HepG2 (cell line): ENCODE measurements at regions of chr9 and their contacts with region 1.

Region 1: GRCh38 chr9:15552636-15553527 is at the start of gene CCDC171:
- DNase-seq: peak; percentile 90
- ATAC-seq: peak; percentile 99
- H3K4me3 ChIP-seq: peak within 1 kb of the TSS; percentile 66 to 80 (median 72)
- H3K27ac ChIP-seq: peak within 1 kb of the TSS; percentile 69
- H3K4me1 ChIP-seq: peaks cover 18% of the 10 kb centered on the region
- H3K27me3 ChIP-seq: peaks cover 0 to 3% of the 10 kb centered on the region in 2 experiments; a peak in 1 of 5 replicates
- CTCF ChIP-seq: no peak
- EP300 ChIP-seq: no peak
- POLR2A ChIP-seq: peak; percentile 62 to 89; a peak in 3 of 4 replicates
- RAD21 ChIP-seq: no peak
- total RNA-seq, gene CCDC171: 2.5 and 2.8 TPM in 2 replicates

Region 2: GRCh38 chr9:15295761-15296405 is 257.0 kb before region 1 on chr9:
- CTCF ChIA-PET with region 1: no interaction called
- POLR2A ChIA-PET with region 1: no interaction called
- in situ Hi-C with region 1: no loop called
- intact Hi-C with region 1: no loop called
- DNase-seq: peak; percentile 42
- ATAC-seq: peak; percentile 69
- H3K4me3 ChIP-seq: peak overlapping the region; percentile 41 to 51 (median 41); a peak in 4 of 6 replicates
- H3K27ac ChIP-seq: peak overlapping the region; percentile 70
- H3K4me1 ChIP-seq: peaks cover 61% of the 10 kb centered on the region
- H3K27me3 ChIP-seq: no peaks in the 10 kb centered on the region
- CTCF ChIP-seq: no peak
- EP300 ChIP-seq: peak in 1 of 2 experiments; percentile 36; a peak in 1 of 4 replicates
- POLR2A ChIP-seq: peak in 1 of 2 experiments; percentile 39; a peak in 1 of 4 replicates
- RAD21 ChIP-seq: no peak

Region 3: GRCh38 chr9:15510789-15511575 is 41.9 kb before region 1 on chr9 and contains the start of gene PSIP1:
- CTCF ChIA-PET with region 1: no interaction called
- POLR2A ChIA-PET with region 1: interaction called, 13 read pairs
- in situ Hi-C with region 1: no loop called
- intact Hi-C with region 1: loop called (anchors 2 kb)
- DNase-seq: peak; percentile 57
- ATAC-seq: peak; percentile 93
- H3K4me3 ChIP-seq: peak within 1 kb of the TSS; percentile 80 to 96 (median 92)
- H3K27ac ChIP-seq: peak within 1 kb of the TSS; percentile 94
- H3K4me1 ChIP-seq: peaks cover 30% of the 10 kb centered on the region
- H3K27me3 ChIP-seq: no peaks in the 10 kb centered on the region; a peak in 1 of 5 replicates
- CTCF ChIP-seq: no peak; the same call in 1 of the 2 replicates
- EP300 ChIP-seq: no peak
- POLR2A ChIP-seq: peak; percentile 76 to 89
- RAD21 ChIP-seq: peak; percentile 28; the same call in 1 of the 2 replicates
- total RNA-seq, gene PSIP1: 46.4 and 53.8 TPM in 2 replicates